ENCODE measurements at regions of chr9 and their contacts with region 1.

Region 1: GRCh38 chr9:14353222-14354056 is 39.5 kb upstream of the NFIB start:
- DNase-seq: peak; percentile 87 to 99 (median 96)

Region 2: DNA sequence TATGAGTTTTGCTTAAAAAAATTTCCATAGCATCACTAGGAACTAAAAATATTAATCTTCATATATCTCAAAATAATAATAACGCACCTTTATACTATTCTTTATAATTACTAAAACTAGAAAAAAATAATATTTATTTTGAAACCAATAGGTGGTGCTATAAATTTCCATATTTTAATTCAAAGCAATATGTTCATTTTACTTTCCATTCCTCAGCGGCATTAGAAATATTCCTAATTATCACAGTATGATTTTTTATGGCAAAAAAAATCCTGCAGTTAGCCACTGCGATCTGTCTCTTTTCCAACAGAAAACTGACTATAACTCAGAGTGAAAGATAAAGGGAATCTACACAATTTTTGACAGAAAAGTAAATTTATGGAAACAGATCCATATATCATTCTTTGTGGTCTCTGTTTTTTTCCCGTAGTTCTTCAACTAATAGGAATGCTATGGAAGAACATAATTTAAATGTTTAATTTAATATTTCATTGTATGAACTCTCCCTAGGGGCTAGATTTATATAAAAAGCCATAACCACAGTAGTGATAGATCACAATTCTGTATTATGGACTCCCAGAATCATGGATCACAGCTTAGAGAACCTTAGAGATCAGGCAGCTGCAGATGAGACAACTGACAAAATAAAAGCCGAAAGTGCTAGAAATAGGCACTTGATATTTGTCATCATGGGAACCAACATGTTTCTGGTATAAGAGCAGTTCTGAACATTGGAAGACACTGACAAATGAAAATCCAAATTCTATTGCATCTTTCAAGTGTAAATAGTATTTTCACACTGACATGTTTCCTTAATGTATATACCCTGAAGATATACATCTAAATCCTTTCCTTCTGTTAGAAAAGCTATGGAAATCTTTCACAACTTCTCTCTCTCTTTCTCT is 906.2 kb before region 1 on chr9:
- intact Hi-C with region 1: loop called (anchors 5 kb)
- DNase-seq: no peak

Region 3: GRCh38 chr9:13942695-13943094 is 410.7 kb before region 1 on chr9:
- intact Hi-C with region 1: no loop called
- DNase-seq: peak in 27 of 42 donors; percentile 11 to 78 (median 44)

Region 4: GRCh38 chr9:14395317-14396082 is 42.1 kb after region 1 on chr9:
- intact Hi-C with region 1: loop called (anchors 2 kb)
- DNase-seq: peak; percentile 64 to 94 (median 86)

Region 5: GRCh38 chr9:14547245-14548060 is 194.0 kb after region 1 on chr9:
- intact Hi-C with region 1: no loop called
- DNase-seq: no peak